BJ (cell line): ENCODE measurements at regions of chr17 and their contacts with region 1.

Region 1: DNA sequence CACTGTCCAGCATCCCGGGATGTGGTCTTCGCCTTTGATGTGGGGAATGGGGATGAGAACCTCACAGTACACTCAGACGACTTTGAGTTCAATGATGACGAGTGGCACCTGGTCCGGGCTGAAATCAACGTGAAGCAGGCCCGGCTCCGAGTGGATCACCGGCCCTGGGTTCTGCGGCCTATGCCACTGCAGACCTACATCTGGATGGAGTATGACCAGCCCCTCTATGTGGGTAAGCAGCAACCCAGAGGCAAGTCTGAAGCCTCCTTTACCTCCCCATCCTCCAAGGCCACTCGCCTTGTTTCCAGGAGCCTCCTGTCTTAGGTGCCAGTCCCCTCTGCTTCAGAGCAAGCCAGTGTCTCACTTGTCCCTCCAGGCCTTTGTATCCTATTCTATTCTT is 10.2 kb downstream of the CNTNAP1 start:
- DNase-seq: no peak
- H3K4me3 ChIP-seq: no peak overlapping the region
- H3K27me3 ChIP-seq: no peaks in the 10 kb centered on the region
- CTCF ChIP-seq: no peak

Region 2: DNA sequence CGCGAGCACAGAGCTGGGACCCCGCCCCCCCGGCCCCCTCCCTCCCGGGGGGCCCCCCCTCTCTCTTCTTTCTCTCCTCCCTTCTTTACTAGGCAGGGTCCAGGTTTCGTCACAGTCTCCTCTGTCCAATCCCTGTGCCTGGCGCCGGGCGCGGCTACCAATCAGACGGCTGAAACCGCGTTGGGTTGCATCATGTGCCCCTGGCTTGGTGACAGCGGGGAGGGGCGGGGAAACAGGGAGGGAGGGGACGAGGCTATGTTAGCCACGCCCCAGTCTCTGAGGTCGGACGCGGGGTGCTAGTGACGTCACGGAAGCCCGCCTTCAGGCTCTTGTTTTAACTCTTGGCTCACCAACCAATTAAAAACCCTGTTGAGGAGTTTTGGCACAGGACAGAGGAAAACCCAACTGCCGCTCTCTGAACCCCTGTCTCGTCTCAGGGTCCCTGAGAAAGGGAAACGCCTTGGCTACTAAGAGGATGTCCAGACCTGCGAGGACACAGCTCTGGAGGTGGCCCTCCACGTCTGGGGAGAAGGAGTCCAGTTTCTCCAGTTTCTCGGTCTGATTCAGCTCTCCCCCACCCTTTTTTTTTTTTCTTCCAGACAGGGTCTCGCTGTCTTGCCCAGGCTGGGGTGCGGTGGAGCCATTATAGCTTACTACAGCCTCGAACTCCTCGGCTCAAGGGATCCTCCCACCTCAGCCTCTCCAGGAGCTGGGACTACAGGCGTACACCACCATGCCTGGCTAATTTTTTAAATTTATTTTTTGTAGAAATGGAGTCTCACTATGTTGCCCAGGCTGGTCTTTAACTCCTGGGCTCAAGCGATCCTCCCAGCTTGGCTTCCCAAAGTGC is 15.3 kb before region 1 on chr17:
- CTCF ChIA-PET with region 1: interaction called, 10 read pairs
- POLR2A ChIA-PET with region 1: no interaction called
- DNase-seq: peak; percentile 95
- H3K4me3 ChIP-seq: peak overlapping the region; percentile 83
- H3K27me3 ChIP-seq: no peaks in the 10 kb centered on the region
- CTCF ChIP-seq: no peak